ENCODE measurements at regions of chr5 and their contacts with region 1.

Region 1: DNA sequence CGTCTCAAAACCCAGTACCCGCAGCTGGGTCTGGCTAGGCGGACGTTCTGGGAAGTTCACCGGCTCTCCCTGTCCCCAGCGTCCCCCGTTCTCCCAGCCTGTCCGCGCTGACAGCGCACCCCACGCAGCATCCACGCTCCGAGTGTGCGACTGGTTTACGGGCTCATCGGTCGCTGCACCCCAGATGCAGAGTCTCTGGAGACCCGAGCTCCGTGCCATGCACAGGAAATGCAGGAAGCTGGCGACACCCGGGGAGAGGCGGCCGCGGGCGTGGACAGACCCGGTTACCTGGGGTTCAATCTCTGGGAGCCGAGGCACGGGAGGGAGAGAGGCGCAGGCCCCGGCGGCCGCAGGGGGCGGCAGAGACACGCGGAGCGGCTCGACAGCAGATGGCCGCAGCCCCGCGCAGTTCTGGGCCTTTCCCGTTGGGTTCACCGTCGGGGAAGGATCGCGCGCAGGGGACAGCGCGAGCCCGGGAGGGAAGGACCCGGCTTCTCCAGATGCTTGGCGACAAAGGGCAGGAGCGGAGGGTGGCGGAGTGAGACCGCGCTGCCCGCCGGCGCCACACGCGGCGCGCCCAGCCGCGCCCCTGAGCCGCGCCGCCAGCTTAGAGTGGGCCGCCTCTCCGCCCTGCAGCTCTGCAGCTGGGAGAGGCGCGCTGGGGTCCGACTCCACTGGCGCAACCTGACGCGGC is 558 bp downstream of the SHROOM1 start:
- H3K4me3 Mint-ChIP-seq: peak overlapping the region; percentile 96
- H3K27ac Mint-ChIP-seq: peak overlapping the region; percentile 77
- H3K4me1 Mint-ChIP-seq: peaks cover 28% of the 10 kb centered on the region
- H3K27me3 Mint-ChIP-seq: peaks cover 68% of the 10 kb centered on the region

Region 2: DNA sequence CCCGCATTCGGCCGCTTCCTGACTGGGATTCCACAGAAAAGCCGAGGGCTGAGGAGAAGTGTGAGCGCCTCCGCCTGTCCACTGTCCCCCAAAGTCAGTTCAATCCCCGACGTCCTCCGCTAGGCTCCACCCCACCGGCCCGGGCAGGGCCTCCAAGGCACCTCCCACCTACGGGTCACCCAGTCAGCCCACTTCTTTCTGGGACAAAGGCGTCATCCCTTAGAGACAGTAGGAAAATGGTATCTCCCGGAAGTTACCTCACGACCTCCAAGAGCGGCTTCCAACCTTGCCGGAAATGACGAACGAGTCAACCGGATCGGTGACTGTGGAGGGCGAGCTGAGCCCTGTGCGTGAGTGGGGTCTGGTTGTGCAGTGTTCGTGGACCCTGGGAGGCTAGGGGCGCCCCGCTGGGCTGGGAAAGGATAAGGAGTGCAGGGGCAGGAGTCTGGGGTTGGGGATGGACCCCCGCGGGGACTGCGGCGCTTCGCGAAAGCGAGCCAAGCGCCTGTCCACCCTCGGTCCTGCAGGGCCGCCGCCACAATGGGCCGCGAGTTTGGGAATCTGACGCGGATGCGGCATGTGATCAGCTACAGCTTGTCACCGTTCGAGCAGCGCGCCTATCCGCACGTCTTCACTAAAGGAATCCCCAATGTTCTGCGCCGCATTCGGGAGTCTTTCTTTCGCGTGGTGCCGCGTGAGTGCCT is 36.6 kb after region 1 on chr5 and contains the starts of genes GDF9 and UQCRQ:
- intact Hi-C with region 1: loop called (anchors 2 kb)
- H3K4me3 Mint-ChIP-seq: peak within 1 kb of the TSS; percentile 99
- H3K27ac Mint-ChIP-seq: peak within 1 kb of the TSS; percentile 98
- H3K4me1 Mint-ChIP-seq: peaks cover 24% of the 10 kb centered on the region
- H3K27me3 Mint-ChIP-seq: no peaks in the 10 kb centered on the region

Region 3: DNA sequence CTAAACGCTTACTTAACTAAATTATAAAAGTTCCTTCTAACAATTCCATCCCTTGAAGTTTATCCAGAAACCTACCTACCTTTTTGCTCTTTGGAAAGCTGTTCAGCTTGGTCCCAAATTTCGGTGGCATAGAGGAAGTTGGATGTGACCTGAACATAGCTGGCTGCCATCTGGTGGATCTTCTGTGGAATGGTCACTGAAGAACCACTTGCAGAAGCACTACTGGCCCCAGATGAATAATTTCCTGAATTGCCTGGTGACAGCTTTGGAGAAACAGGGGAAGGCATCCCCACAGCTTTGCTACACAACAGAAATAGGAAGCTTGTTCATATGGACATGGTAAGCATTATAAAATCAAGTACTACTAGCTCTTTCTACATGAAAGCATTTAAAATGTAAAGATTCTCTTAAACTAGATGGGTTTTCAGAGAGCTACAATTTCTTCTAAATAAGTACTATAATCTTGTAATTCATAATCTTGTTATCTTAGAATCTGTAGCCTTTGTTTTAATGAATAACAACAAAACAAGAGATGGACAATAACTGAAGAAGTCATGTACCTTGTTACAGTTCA is 53.5 kb after region 1 on chr5:
- intact Hi-C with region 1: loop called (anchors 1 kb)
- H3K4me3 Mint-ChIP-seq: no peak overlapping the region
- H3K27ac Mint-ChIP-seq: no peak overlapping the region
- H3K4me1 Mint-ChIP-seq: peaks cover 23% of the 10 kb centered on the region
- H3K27me3 Mint-ChIP-seq: no peaks in the 10 kb centered on the region

Measured in dendritic cell treated with granulocyte-macrophage colony-stimulating factor and Interleukin-4, amounts not matched to agents 40 ng/mL and 50 ng/mL, for 4 days (primary cell).